ENCODE measurements at regions of chr6 and their contacts with region 1.

Region 1: GRCh38 chr6:109705258-109705657 is 14.2 kb downstream of the FIG4 start:
- DNase-seq: peak; percentile 86 to 94
- H3K4me3 ChIP-seq: no peak overlapping the region
- CTCF ChIP-seq: peak in 1 of 3 donors; percentile 95
- POLR2A ChIP-seq: no peak

Region 2: DNA sequence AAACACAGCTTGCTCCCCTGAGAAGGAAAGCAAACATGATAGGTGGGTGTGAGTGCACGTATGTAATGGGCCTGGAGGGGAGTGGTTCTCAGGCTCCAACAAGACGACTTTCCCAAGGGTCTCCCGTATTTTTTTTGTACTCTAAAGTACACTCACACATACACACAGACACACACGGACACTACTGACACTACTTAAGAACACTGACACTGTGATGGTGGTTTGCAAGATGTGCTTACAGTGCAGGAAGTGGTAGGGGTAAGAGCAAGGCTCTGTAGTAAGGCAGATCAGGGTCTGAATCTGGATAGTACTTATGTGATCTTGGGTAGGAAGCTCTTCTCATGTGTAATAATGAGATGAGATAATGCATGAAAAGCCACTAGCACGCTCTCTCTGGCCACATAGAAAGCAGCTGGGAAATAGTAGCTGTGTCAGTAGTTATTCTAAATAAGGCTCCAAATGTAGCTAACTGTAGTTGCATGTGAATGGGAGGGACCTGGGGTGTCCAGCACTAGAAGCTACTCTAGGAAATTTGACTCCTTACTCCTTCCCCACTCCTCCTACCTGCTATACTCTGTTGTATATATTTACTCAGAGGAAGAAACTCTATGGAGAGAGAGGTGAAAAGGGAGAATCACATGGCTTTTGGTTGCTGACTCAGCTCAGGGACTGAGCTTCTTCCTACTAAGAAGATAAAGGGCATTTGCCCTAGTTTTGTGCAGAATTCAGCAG is 213.9 kb before region 1 on chr6:
- intact Hi-C with region 1: no loop called
- DNase-seq: no peak
- H3K4me3 ChIP-seq: no peak overlapping the region
- CTCF ChIP-seq: no peak
- POLR2A ChIP-seq: no peak

Region 3: GRCh38 chr6:110039364-110039980 is 334.2 kb after region 1 on chr6:
- intact Hi-C with region 1: loop called (anchors 5 kb)
- DNase-seq: peak; percentile 86 to 97
- H3K4me3 ChIP-seq: no peak overlapping the region
- CTCF ChIP-seq: peak in 1 of 3 donors; percentile 73
- POLR2A ChIP-seq: no peak

Region 4: GRCh38 chr6:110048221-110048875 is 343.1 kb after region 1 on chr6:
- intact Hi-C with region 1: loop called (anchors 5 kb)
- DNase-seq: no peak
- H3K4me3 ChIP-seq: no peak overlapping the region
- CTCF ChIP-seq: no peak
- POLR2A ChIP-seq: no peak

Region 5: DNA sequence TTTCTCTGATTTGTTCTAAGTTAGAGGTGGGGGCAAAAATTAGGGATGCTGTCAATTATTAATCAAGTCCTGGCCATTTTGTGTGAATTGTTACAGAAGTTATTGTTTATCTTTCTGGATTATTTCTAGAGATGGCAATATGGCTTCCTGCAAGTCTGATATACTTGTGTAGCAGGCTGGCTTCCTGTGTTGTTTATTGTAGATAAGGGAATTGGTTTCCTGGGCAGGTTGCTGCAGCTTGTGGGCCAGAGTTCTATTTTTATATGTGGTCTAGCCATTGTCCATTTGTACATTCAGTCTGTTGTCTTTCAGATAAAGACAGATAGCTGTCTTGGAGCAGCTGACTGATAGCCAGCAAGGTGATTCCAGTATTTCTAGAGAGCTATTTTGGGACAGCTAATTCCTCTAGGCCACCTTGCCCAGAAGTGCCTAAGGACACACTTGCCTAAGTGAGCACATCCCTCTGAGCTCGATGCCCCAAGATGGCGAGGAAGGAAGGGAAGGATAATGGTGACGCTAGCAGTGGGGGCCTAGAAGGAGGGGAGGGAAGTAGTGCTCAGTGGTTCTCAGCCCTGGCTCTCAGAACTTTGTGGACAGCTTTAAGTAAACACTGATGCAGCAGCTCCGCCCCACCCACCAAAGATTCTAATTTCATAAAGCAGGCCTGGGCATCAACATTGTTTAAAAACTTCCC is 684.6 kb after region 1 on chr6:
- intact Hi-C with region 1: loop called (anchors 5 kb)
- DNase-seq: no peak
- H3K4me3 ChIP-seq: no peak overlapping the region
- CTCF ChIP-seq: no peak
- POLR2A ChIP-seq: no peak

Measured in lower leg skin (tissue), 4 donors.